ENCODE measurements at regions of chr9 and their contacts with region 1.

Region 1: GRCh38 chr9:127450830-127451724 is at the starts of genes LRSAM1 and RPL12:
- DNase-seq: peak; percentile 90
- H3K4me3 ChIP-seq: peak within 1 kb of the TSS; percentile 79 to 91 (median 90)
- H3K27ac ChIP-seq: peak within 1 kb of the TSS; percentile 80
- H3K4me1 ChIP-seq: peaks cover 26% of the 10 kb centered on the region
- H3K27me3 ChIP-seq: no peaks in the 10 kb centered on the region
- CTCF ChIP-seq: peak in 1 of 2 donors; percentile 3
- total RNA-seq, gene LRSAM1: 15.5 to 20.6 TPM
- total RNA-seq, gene RPL12: 1,316 to 1,441 TPM

Region 2: GRCh38 chr9:127214421-127215267 is 236.4 kb before region 1 on chr9:
- CTCF ChIA-PET with region 1: no interaction called
- dilution Hi-C with region 1: no loop called
- in situ Hi-C with region 1: no loop called
- intact Hi-C with region 1: loop called (anchors 10 kb)
- DNase-seq: peak; percentile 52
- H3K4me3 ChIP-seq: no peak overlapping the region
- H3K27ac ChIP-seq: no peak overlapping the region
- H3K4me1 ChIP-seq: no peaks in the 10 kb centered on the region
- H3K27me3 ChIP-seq: no peaks in the 10 kb centered on the region
- CTCF ChIP-seq: peak; percentile 85 to 92

Region 3: DNA sequence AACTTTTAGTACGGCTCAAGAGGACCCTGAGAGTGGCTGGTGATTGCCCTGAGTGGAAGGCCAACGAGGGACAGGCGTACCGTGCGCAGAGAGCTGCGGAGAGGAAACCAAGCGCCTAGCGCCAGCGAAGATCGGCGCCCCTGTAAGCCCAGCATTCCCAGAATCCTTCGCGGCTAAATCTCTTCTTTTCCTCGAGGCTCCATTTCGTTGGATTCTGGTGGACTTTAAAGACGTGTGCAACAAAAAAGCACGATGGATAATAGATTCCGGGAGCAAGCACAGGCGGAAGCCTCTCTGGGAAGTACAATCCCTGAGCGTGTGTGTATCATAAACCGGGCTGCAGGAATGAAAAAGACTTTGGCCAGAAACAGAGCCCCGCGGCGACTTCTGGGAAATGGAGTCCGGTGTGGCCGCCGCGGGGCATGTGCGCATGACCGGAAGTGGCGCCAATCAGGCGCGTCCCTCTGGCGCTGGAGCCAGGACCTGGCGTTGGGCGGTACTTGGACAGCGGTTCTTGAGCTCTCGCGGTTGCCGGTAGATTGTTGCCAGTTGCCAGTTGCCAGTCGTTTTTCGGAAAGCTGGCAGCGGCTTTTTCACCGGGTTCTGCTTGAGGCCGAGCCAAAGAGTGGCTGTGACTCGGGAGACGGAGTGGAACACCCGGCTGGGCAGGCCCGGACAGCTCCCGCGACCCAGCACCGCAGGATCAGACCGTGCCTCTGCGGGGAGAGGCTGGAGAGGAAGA is 27.0 kb before region 1 on chr9 and contains the start of gene ZNF79:
- CTCF ChIA-PET with region 1: no interaction called
- dilution Hi-C with region 1: no loop called
- in situ Hi-C with region 1: no loop called
- intact Hi-C with region 1: loop called (anchors 2 kb)
- DNase-seq: peak; percentile 90
- H3K4me3 ChIP-seq: peak within 1 kb of the TSS; percentile 67 to 88 (median 84)
- H3K27ac ChIP-seq: peak within 1 kb of the TSS; percentile 63
- H3K4me1 ChIP-seq: peaks cover 21% of the 10 kb centered on the region
- H3K27me3 ChIP-seq: no peaks in the 10 kb centered on the region
- CTCF ChIP-seq: no peak
- total RNA-seq, gene ZNF79: 10.5 to 16.8 TPM

Region 4: GRCh38 chr9:127970401-127971313 is 519.6 kb after region 1 on chr9:
- CTCF ChIA-PET with region 1: no interaction called
- dilution Hi-C with region 1: no loop called
- in situ Hi-C with region 1: no loop called
- intact Hi-C with region 1: no loop called
- DNase-seq: peak; percentile 58
- H3K4me3 ChIP-seq: no peak overlapping the region
- H3K27ac ChIP-seq: no peak overlapping the region
- H3K4me1 ChIP-seq: peaks cover 64% of the 10 kb centered on the region
- H3K27me3 ChIP-seq: no peaks in the 10 kb centered on the region
- CTCF ChIP-seq: no peak